Posterior cingulate gyrus (tissue), 11 donors: ENCODE measurements at regions of chr5 and their contacts with region 1.

Region 1: DNA sequence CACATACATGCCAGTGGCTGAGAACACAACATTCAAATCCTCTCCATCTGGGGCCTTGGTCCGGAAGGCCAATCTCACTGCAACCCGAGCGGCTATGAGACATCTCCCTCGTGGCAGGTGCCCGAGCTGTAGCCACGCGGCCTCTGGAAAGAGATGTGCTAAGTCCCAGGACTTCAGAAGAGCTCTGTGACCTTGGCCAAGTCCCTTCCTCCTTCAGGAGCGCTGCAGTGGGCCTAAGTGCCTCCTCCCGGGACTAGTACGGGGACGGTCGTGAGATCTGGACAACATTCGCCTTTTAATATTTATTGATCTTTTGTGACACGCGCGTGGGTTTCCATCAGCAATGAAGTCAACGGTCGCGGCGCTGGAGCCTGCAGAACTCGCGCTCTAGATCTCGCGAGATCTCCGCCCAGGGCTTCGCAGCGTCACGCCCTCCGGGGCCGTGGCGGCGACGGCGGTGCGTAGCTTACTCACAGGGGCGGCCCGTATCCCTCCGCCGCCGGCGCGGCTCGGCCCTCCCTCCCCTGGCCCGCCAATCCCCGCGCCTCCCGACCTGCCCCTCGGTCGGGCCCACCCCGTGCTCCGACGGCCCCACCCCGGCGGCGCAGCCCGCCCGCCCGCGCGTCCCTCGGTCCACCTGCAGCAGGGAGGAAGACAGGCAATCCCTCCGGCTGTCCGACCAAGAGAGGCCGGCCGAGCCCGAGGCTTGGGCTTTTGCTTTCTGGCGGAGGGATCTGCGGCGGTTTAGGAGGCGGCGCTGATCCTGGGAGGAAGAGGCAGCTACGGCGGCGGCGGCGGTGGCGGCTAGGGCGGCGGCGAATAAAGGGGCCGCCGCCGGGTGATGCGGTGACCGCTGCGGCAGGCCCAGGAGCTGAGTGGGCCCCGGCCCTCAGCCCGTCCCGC is at the start of gene UBE2D2:
- DNase-seq: peak; percentile 93 to 99 (median 96)

Region 2: DNA sequence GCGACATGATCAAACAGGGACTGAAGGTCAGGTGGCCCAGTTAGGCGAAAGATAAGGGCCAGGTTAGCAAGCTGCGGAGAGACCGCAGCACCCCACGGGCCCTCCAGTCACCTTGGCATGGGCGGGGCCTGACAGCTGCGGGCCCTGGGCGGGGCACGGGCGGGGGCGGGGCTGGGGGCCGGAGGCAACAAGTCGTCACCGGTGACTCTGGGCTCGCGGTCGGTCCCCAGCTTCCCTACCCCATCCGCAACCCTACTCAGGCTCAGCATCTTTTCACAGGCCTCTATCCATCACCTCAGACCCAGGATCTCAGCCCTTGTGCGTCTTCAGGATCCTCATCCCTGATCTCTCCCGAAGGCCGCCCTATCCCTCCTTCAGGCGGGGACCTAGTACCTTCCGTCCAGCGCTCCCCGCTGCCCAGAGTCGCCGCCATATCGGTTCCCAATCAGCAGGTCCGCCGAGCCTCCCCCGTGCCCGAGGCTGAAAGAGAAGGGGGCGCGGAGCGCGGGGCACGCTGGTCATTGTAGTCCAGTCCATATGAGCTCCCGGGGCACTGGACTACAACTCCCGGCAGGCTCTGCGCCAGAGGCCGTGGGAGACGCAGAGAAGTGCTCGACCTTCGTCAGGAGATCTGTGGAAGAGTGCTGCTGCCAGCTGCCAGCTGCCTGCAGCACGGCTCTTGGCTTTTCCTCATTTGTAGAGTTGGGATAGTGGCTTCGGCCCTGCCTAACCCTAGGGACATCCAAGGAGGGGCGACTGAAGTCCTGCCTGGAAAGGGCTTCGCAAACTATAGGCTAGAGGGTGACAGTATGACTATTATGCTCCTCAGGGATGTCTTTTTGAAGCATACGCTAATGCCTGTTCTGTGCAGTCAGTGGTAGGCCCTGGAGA is 121.7 kb before region 1 on chr5 and contains the start of gene DNAJC18:
- intact Hi-C with region 1: loop called (anchors 1 kb)
- DNase-seq: peak; percentile 95 to 100 (median 98)